ENCODE measurements at regions of chr11 and their contacts with region 1.

Region 1: DNA sequence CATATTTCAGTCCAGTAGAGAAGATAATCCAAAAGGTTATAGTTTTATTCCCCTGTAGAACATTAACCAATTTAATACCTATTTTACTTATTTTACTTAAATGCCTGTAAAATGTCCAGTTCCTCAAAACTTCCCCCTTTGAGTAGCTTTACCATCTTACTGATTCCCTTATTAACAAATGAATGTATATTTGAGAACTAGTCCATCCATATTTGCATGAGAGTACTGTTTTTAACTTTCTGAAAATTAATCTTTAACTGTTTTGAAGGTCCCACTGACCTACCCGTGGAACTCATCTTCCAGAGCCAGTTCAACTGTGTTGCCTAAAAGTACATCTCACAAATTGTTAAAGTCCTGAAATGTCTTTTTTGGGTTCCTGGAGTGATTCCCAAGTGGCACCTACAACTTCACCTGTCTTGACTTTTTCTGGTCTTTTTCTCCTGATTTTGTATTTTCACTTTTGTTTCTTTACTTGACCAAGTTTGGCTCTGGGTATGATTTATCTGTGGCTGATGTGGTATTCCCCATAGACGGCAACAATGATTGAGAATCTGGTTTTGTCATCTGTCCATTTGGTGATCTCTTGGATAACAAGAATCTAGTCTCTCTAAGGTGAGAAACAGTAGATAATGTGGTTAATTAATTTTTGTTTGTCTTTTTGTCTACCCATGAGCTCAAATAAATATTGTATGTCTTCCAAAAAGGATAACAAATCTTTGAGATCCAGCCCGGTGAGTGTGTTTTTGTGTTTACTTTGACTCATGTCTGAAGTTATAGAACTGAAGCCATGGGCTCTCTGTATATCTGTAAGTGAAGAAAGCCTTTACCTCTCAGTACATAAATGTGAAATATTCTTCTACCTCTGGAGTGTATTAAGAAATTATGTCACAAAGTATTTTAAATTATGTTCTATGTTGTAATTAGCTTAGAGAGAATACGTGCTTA is 174.2 kb downstream of the ETS1 start:
- DNase-seq: no peak
- ATAC-seq: no peak
- H3K4me3 ChIP-seq: no peak overlapping the region
- H3K27ac ChIP-seq: peak overlapping the region in 2 of 12 donors; percentile 4 to 33
- H3K4me1 ChIP-seq: peaks cover 0 to 44% (median 10%) of the 10 kb centered on the region in 12 donors
- H3K27me3 ChIP-seq: no peaks in the 10 kb centered on the region
- CTCF ChIP-seq: no peak
- POLR2A ChIP-seq: no peak

Region 2: DNA sequence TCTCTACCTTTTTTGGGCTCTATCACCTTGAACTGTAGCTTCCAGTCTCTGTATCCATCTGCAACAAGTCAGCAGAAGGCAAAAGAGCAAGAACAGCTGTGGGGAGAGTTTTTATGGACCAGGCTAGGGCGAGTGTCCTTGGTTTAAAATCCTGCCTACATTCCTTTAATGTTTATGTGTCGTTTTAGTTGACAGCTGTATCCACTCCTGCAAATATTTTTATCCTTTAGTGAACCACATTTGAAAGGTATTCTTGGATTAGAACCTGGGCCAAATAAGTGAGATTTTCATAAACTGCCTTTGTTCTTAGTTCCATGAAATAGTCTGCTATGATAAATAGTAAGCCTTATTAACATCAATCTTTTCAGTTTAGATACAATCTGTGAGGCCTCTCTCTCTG is 538.0 kb before region 1 on chr11:
- intact Hi-C with region 1: no loop called
- DNase-seq: no peak
- ATAC-seq: no peak
- H3K4me3 ChIP-seq: no peak overlapping the region
- H3K27ac ChIP-seq: no peak overlapping the region
- H3K4me1 ChIP-seq: no peaks in the 10 kb centered on the region
- H3K27me3 ChIP-seq: no peaks in the 10 kb centered on the region
- CTCF ChIP-seq: no peak
- POLR2A ChIP-seq: no peak

Region 3: GRCh38 chr11:128342511-128343134 is 70.5 kb before region 1 on chr11:
- intact Hi-C with region 1: loop called in 2 of 10 experiments (anchors 5 kb)
- DNase-seq: peak in 4 of 5 donors; percentile 64 to 81 (median 70)
- ATAC-seq: peak; percentile 88 to 93 (median 93)
- H3K4me3 ChIP-seq: no peak overlapping the region
- H3K27ac ChIP-seq: peak overlapping the region; percentile 11 to 89 (median 73)
- H3K4me1 ChIP-seq: peaks cover 0 to 40% (median 21%) of the 10 kb centered on the region in 12 donors
- H3K27me3 ChIP-seq: no peaks in the 10 kb centered on the region
- CTCF ChIP-seq: no peak
- POLR2A ChIP-seq: no peak

Region 4: GRCh38 chr11:128365044-128365443 is 48.1 kb before region 1 on chr11:
- intact Hi-C with region 1: no loop called
- DNase-seq: no peak
- ATAC-seq: no peak
- H3K4me3 ChIP-seq: no peak overlapping the region
- H3K27ac ChIP-seq: no peak overlapping the region
- H3K4me1 ChIP-seq: peaks cover 0 to 7% (median 0%) of the 10 kb centered on the region in 12 donors
- H3K27me3 ChIP-seq: no peaks in the 10 kb centered on the region
- CTCF ChIP-seq: no peak
- POLR2A ChIP-seq: no peak

Measured in heart left ventricle (tissue), 16 donors.